CD4-positive, alpha-beta T cell (primary cell): ENCODE measurements at regions of chr17 and their contacts with region 1.

Region 1: GRCh38 chr17:3913531-3914311 is 2.5 kb downstream of the P2RX1 start:
- DNase-seq: peak; percentile 68 to 89 (median 76)
- ATAC-seq: peak; percentile 61
- H3K4me3 ChIP-seq: no peak overlapping the region
- H3K4me3 Mint-ChIP-seq: no peak overlapping the region
- H3K27ac ChIP-seq: no peak overlapping the region
- H3K27ac Mint-ChIP-seq: peak overlapping the region; percentile 78
- H3K4me1 ChIP-seq: peaks cover 55% of the 10 kb centered on the region
- H3K4me1 Mint-ChIP-seq: peaks cover 50% of the 10 kb centered on the region
- H3K27me3 ChIP-seq: no peaks in the 10 kb centered on the region
- H3K27me3 Mint-ChIP-seq: no peaks in the 10 kb centered on the region
- CTCF ChIP-seq: peak; percentile 98

Region 2: GRCh38 chr17:3935140-3935542 is 21.4 kb after region 1 on chr17:
- CTCF ChIA-PET with region 1: interaction called, 11 read pairs
- POLR2A ChIA-PET with region 1: no interaction called
- intact Hi-C with region 1: no loop called
- DNase-seq: peak in 10 of 14 experiments; percentile 22 to 61 (median 38)
- ATAC-seq: no peak
- H3K4me3 ChIP-seq: no peak overlapping the region
- H3K4me3 Mint-ChIP-seq: no peak overlapping the region
- H3K27ac ChIP-seq: no peak overlapping the region
- H3K27ac Mint-ChIP-seq: no peak overlapping the region
- H3K4me1 ChIP-seq: no peaks in the 10 kb centered on the region
- H3K4me1 Mint-ChIP-seq: no peaks in the 10 kb centered on the region
- H3K27me3 ChIP-seq: no peaks in the 10 kb centered on the region
- H3K27me3 Mint-ChIP-seq: no peaks in the 10 kb centered on the region
- CTCF ChIP-seq: peak; percentile 25

Region 3: GRCh38 chr17:4004517-4005295 is 91.0 kb after region 1 on chr17:
- CTCF ChIA-PET with region 1: interaction called, 31 read pairs
- POLR2A ChIA-PET with region 1: interaction called, 3 read pairs
- intact Hi-C with region 1: loop called (anchors 1 kb)
- DNase-seq: peak; percentile 34 to 81 (median 54)
- ATAC-seq: peak; percentile 93
- H3K4me3 ChIP-seq: no peak overlapping the region
- H3K4me3 Mint-ChIP-seq: no peak overlapping the region
- H3K27ac ChIP-seq: no peak overlapping the region
- H3K27ac Mint-ChIP-seq: no peak overlapping the region
- H3K4me1 ChIP-seq: peaks cover 9% of the 10 kb centered on the region
- H3K4me1 Mint-ChIP-seq: peaks cover 8% of the 10 kb centered on the region
- H3K27me3 ChIP-seq: no peaks in the 10 kb centered on the region
- H3K27me3 Mint-ChIP-seq: no peaks in the 10 kb centered on the region
- CTCF ChIP-seq: peak; percentile 97

Region 4: GRCh38 chr17:4074831-4075495 is 161.2 kb after region 1 on chr17:
- CTCF ChIA-PET with region 1: interaction called, 3 read pairs
- POLR2A ChIA-PET with region 1: no interaction called
- intact Hi-C with region 1: loop called (anchors 2 kb)
- DNase-seq: peak in 4 of 14 experiments; percentile 20 to 75 (median 67)
- ATAC-seq: peak; percentile 85
- H3K4me3 ChIP-seq: no peak overlapping the region
- H3K4me3 Mint-ChIP-seq: no peak overlapping the region
- H3K27ac ChIP-seq: no peak overlapping the region
- H3K27ac Mint-ChIP-seq: no peak overlapping the region
- H3K4me1 ChIP-seq: no peaks in the 10 kb centered on the region
- H3K4me1 Mint-ChIP-seq: no peaks in the 10 kb centered on the region
- H3K27me3 ChIP-seq: no peaks in the 10 kb centered on the region
- H3K27me3 Mint-ChIP-seq: no peaks in the 10 kb centered on the region
- CTCF ChIP-seq: peak; percentile 67